Transverse colon (tissue), 4 donors: ENCODE measurements at regions of chr6 and their contacts with region 1.

Region 1: DNA sequence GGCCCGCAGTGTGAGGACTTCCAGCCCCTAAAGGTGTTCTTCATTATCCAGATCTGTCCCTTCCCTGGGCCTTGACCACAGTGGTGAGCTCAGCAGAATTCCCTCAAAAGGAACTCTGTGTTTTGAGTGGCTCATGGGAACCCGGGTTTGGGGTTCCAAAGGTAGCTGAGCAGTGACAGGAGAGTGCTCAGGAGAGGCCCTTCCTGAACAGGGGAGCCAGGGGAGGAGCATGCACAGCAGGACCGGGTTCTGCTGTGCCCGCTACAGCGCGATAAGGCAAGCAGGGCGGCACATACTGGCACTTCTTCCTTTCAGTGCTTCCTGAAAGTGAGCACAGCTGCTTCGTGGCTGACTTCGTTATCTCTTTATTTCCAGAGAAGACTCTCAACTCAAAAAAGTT is 88.3 kb downstream of the SSR1 start:
- DNase-seq: no peak
- H3K4me3 ChIP-seq: no peak overlapping the region
- H3K27ac ChIP-seq: no peak overlapping the region
- H3K4me1 ChIP-seq: peaks cover 0 to 6% (median 0%) of the 10 kb centered on the region in 4 donors
- H3K27me3 ChIP-seq: no peaks in the 10 kb centered on the region
- CTCF ChIP-seq: no peak
- EP300 ChIP-seq: no peak
- POLR2A ChIP-seq: no peak

Region 2: DNA sequence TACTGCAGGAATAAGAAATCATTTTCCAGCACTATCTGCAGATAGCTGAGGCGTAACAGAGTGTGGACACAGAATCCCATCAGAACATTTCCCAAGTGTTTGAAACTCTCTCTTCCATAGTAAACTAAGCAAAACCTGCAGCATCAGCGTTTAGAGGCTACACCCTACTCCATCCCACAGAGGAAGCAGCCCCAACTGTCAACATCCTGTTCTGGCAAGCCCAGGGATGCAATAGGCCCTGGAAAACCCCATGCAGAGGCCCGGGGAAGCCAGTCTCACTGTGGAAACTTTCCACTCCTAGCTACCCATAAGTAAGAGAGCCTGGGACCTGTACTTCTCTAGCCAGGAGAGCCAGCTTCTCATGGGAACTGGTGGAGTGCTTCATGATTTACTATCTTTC is 506.8 kb before region 1 on chr6:
- in situ Hi-C with region 1: loop called in 1 of 4 experiments (anchors 25 kb)
- intact Hi-C with region 1: loop called (anchors 5 kb)
- DNase-seq: no peak
- H3K4me3 ChIP-seq: no peak overlapping the region
- H3K27ac ChIP-seq: peak overlapping the region; percentile 6 to 35 (median 22)
- H3K4me1 ChIP-seq: peaks cover 14 to 40% (median 25%) of the 10 kb centered on the region in 4 donors
- H3K27me3 ChIP-seq: no peaks in the 10 kb centered on the region
- CTCF ChIP-seq: no peak
- EP300 ChIP-seq: no peak
- POLR2A ChIP-seq: no peak

Region 3: DNA sequence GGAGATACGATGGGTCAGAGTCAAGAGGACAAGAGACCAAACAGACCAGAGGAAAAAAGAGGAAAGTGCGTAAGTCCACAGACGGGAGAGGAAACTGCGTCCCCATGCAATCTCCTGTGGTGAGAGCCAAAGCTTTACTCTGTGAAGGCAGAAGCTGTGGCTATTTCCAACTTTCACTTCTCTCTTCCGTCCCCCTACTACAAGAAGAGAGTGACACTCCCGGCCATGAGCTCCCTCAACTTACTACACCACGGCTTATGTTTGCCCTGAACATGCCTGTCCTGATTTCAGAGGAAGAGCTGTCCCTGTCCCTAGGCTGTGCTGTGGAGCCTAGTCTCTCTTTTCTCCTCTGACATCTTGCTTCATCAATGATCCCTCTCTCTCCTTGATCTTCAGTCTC is 99.8 kb after region 1 on chr6:
- in situ Hi-C with region 1: no loop called
- intact Hi-C with region 1: no loop called
- DNase-seq: peak; percentile 21
- H3K4me3 ChIP-seq: no peak overlapping the region
- H3K27ac ChIP-seq: no peak overlapping the region
- H3K4me1 ChIP-seq: no peaks in the 10 kb centered on the region
- H3K27me3 ChIP-seq: no peaks in the 10 kb centered on the region
- CTCF ChIP-seq: no peak
- EP300 ChIP-seq: no peak
- POLR2A ChIP-seq: no peak